ENCODE measurements at regions of chr5 and their contacts with region 1.

Region 1: DNA sequence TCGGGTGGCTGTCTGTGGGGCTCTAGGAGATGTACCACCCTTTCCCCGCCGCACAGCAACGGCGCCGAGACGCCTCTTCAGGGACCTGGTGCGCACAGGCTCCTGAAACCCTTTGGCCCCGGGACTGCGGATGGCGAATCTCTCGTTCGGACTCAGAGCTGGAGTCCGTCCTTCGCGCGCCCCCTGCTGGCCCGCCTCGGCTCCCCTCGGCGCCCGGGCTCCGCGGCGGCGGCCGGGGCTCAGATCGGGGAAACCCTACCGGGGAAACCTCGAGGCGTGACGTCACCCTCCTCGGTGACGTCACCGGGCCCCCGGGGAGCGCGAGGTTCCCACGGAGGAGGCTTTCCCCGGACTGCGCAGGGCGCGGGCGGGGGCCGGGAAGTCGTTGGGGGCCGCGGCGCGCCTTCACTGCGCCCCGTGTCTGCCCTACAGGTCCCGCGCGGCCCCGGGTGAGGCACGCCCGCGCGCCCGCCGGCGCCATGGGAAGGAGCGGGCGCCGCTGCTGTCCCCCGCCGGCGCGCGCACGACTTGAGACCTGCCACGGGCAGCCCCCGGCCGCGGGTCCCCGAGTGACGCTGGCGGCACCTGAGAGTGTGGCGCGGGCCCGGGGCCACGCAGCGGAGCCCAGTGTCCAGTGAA is 7.9 kb downstream of the PRR7 start:
- DNase-seq: peak; percentile 88 to 94 (median 91)
- H3K4me3 ChIP-seq: peak overlapping the region in 1 of 2 donors; percentile 77
- H3K4me3 Mint-ChIP-seq: peak overlapping the region; percentile 31 to 89 (median 82)
- H3K27ac ChIP-seq: peak overlapping the region; percentile 96
- H3K27ac Mint-ChIP-seq: peak overlapping the region; percentile 76 to 97 (median 85)
- H3K4me1 ChIP-seq: peaks cover 16% of the 10 kb centered on the region
- H3K4me1 Mint-ChIP-seq: peaks cover 9 to 36% (median 23%) of the 10 kb centered on the region in 4 donors
- H3K27me3 ChIP-seq: no peaks in the 10 kb centered on the region
- H3K27me3 Mint-ChIP-seq: peaks cover 0 to 2% of the 10 kb centered on the region in 2 donors

Region 2: GRCh38 chr5:177276886-177277285 is 177.6 kb before region 1 on chr5:
- CTCF ChIA-PET with region 1: no interaction called
- POLR2A ChIA-PET with region 1: no interaction called
- intact Hi-C with region 1: no loop called
- DNase-seq: no peak
- H3K4me3 ChIP-seq: no peak overlapping the region
- H3K4me3 Mint-ChIP-seq: no peak overlapping the region
- H3K27ac ChIP-seq: no peak overlapping the region
- H3K27ac Mint-ChIP-seq: peak overlapping the region in 2 of 7 donors; percentile 59 to 66
- H3K4me1 ChIP-seq: no peaks in the 10 kb centered on the region
- H3K4me1 Mint-ChIP-seq: peaks cover 0 to 6% (median 3%) of the 10 kb centered on the region in 4 donors
- H3K27me3 ChIP-seq: no peaks in the 10 kb centered on the region
- H3K27me3 Mint-ChIP-seq: no peaks in the 10 kb centered on the region

Region 3: GRCh38 chr5:177311723-177312648 is 142.5 kb before region 1 on chr5 and contains the start of gene MXD3:
- CTCF ChIA-PET with region 1: interaction called, 78 read pairs
- POLR2A ChIA-PET with region 1: interaction called, 7 read pairs
- intact Hi-C with region 1: no loop called
- DNase-seq: peak; percentile 90 to 96 (median 93)
- H3K4me3 ChIP-seq: peak within 1 kb of the TSS; percentile 24 to 64
- H3K4me3 Mint-ChIP-seq: peak within 1 kb of the TSS; percentile 70 to 86 (median 80)
- H3K27ac ChIP-seq: peak within 1 kb of the TSS; percentile 49
- H3K27ac Mint-ChIP-seq: peak within 1 kb of the TSS; percentile 29 to 83 (median 75)
- H3K4me1 ChIP-seq: peaks cover 41% of the 10 kb centered on the region
- H3K4me1 Mint-ChIP-seq: peaks cover 17 to 49% (median 30%) of the 10 kb centered on the region in 4 donors
- H3K27me3 ChIP-seq: no peaks in the 10 kb centered on the region
- H3K27me3 Mint-ChIP-seq: no peaks in the 10 kb centered on the region
- total RNA-seq, gene MXD3: 17.3 TPM

Region 4: DNA sequence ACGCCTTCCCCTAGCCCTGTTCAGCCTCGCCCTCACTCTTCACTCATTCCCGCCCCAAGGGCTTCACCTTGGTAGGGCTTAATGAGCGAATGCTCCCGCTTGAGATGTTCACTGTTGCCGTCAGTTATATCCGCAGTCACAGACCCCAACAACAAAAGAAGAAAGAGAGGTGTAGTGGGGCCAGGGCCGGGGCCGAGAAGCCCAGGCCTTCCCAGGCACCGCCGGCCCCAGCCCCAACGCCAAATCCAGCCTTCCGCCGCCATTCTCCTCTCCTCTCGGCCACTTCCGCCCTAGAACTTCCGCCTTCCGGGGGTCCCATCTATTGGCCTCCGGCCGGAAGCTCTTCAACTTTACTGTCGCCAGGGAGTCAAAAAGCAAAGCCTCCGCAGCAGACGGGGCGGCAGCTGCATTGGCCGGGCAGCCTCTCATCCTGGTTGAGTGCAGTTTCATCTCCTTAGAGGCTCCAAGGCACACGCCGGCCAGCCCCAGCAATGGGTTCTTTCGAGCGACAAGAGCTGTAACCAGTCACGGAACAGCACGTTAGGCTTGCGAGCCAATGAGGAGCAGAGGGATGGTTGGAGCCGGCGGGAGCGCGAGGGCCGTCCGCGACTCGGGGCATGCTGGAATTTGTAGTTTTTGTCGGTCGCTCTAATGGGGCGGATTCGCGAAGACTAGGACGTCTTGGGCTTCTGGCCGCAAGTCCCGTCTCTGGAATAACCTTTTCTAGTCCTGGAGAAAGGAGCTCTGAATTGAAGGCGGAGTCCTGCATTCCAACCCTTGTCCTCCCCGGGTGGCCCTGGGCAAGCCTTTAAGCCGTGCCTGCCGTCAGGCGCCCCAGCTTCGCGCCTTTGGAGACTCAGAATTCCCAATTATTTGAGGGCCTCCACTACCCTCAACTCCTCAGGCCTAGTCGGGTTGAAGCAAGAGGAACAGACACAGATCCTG is 102.9 kb before region 1 on chr5 and contains the start of gene LMAN2:
- CTCF ChIA-PET with region 1: interaction called, 13 read pairs
- POLR2A ChIA-PET with region 1: interaction called, 18 read pairs
- intact Hi-C with region 1: no loop called
- DNase-seq: peak; percentile 93 to 95 (median 94)
- H3K4me3 ChIP-seq: peak within 1 kb of the TSS; percentile 91 to 99
- H3K4me3 Mint-ChIP-seq: peak within 1 kb of the TSS; percentile 91 to 100 (median 97)
- H3K27ac ChIP-seq: peak within 1 kb of the TSS; percentile 93
- H3K27ac Mint-ChIP-seq: peak within 1 kb of the TSS; percentile 97 to 100 (median 99)
- H3K4me1 ChIP-seq: peaks cover 62% of the 10 kb centered on the region
- H3K4me1 Mint-ChIP-seq: peaks cover 42 to 81% (median 63%) of the 10 kb centered on the region in 4 donors
- H3K27me3 ChIP-seq: no peaks in the 10 kb centered on the region
- H3K27me3 Mint-ChIP-seq: no peaks in the 10 kb centered on the region
- total RNA-seq, gene LMAN2: 114 to 123 TPM

Region 5: DNA sequence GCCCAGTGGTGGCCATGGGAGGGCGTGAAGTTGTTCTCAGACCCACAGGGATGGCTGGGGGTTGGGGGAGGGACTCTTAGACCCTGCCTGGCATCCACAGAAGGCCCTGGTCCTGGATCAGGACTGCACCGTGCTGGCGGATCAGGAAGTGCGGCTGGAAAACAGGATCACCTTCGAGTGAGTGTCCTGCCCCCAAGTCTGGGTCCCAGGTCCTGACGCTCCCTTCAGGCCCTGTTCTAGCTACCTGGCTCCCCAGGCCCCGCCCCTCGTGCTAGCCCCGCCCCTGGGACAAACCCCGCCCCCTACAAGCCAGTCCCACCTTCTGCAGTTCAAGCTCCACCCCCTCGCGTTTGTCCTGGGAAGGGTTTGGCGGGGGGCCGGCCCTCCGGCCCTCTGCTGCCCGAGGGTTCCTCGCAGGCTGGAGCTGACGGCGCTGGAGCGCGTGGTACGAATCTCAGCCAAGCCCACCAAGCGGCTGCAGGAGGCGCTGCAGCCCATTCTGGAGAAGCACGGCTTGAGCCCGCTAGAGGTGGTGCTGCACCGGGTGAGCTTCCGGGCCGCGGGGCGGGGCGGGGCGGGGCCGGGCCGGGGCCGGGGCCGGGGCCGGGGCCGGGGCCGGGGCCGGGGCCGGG is 83.9 kb before region 1 on chr5:
- CTCF ChIA-PET with region 1: interaction called, 8 read pairs
- POLR2A ChIA-PET with region 1: interaction called, 22 read pairs
- intact Hi-C with region 1: no loop called
- DNase-seq: peak in 3 of 5 donors; percentile 65 to 81 (median 79)
- H3K4me3 ChIP-seq: no peak overlapping the region
- H3K4me3 Mint-ChIP-seq: peak overlapping the region in 5 of 8 donors; percentile 15 to 80 (median 61)
- H3K27ac ChIP-seq: peak overlapping the region; percentile 28
- H3K27ac Mint-ChIP-seq: peak overlapping the region in 4 of 7 donors; percentile 64 to 88 (median 70)
- H3K4me1 ChIP-seq: peaks cover 85% of the 10 kb centered on the region
- H3K4me1 Mint-ChIP-seq: peaks cover 47 to 78% (median 62%) of the 10 kb centered on the region in 4 donors
- H3K27me3 ChIP-seq: no peaks in the 10 kb centered on the region
- H3K27me3 Mint-ChIP-seq: no peaks in the 10 kb centered on the region

Region 6: GRCh38 chr5:177412603-177413233 is 41.8 kb before region 1 on chr5:
- CTCF ChIA-PET with region 1: interaction called, 821 read pairs
- POLR2A ChIA-PET with region 1: interaction called, 141 read pairs
- intact Hi-C with region 1: no loop called
- DNase-seq: peak in 4 of 5 donors; percentile 59 to 74 (median 65)
- H3K4me3 ChIP-seq: peak overlapping the region; percentile 6 to 37
- H3K4me3 Mint-ChIP-seq: peak overlapping the region; percentile 76 to 84 (median 79)
- H3K27ac ChIP-seq: peak overlapping the region; percentile 47
- H3K27ac Mint-ChIP-seq: peak overlapping the region; percentile 83 to 94 (median 86)
- H3K4me1 ChIP-seq: peaks cover 36% of the 10 kb centered on the region
- H3K4me1 Mint-ChIP-seq: peaks cover 20 to 49% (median 32%) of the 10 kb centered on the region in 4 donors
- H3K27me3 ChIP-seq: no peaks in the 10 kb centered on the region
- H3K27me3 Mint-ChIP-seq: no peaks in the 10 kb centered on the region

Region 7: DNA sequence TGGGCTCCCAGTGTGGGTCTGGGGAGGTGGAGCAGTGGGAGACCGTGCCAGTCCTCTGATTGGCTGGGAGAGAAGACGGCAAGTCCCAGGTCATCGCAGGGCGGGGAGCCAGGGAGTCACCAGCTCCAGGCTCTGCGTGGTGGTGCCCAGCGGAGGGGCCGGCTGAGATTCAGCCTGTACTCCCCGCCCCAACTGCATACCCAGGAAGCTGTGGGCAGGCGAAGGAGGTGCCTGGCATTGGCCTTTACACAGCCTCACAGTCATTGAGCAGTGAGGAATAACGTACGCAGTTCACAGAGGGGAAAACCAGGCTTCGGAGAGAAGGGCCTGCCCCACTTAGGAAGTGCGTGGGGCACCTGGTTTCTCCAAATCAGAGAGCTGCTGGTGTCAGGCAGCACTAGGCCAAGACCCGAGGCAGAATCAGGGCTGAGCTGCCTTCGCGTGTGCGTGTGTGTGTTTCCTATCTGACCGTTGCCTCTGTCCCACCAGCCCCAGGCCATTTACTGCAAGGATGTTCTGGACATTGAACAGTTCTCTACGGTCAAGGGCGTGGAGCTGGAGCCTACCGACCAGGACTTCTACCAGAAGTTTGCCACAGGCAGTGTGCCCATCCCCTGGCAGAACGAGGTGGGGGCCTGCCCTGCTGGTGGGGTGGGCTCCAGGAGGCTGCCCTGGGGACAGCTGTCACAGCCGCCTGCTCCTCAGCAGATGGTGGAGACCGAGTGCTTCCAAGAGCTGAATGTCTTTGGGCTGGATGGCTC is 14.1 kb before region 1 on chr5:
- CTCF ChIA-PET with region 1: interaction called, 49 read pairs
- POLR2A ChIA-PET with region 1: interaction called, 93 read pairs
- intact Hi-C with region 1: no loop called
- DNase-seq: peak; percentile 66 to 90 (median 73)
- H3K4me3 ChIP-seq: no peak overlapping the region
- H3K4me3 Mint-ChIP-seq: peak overlapping the region in 7 of 8 donors; percentile 42 to 85 (median 56)
- H3K27ac ChIP-seq: peak overlapping the region; percentile 94
- H3K27ac Mint-ChIP-seq: peak overlapping the region; percentile 88 to 98 (median 95)
- H3K4me1 ChIP-seq: peaks cover 80% of the 10 kb centered on the region
- H3K4me1 Mint-ChIP-seq: peaks cover 37 to 81% (median 56%) of the 10 kb centered on the region in 4 donors
- H3K27me3 ChIP-seq: no peaks in the 10 kb centered on the region
- H3K27me3 Mint-ChIP-seq: no peaks in the 10 kb centered on the region